IMR-90 (cell line): ENCODE measurements at regions of chr1 and their contacts with region 1.

Region 1: GRCh38 chr1:88180449-88181108 is 503.5 kb upstream of the PKN2 start:
- DNase-seq: peak; percentile 79
- ATAC-seq: peak; percentile 100
- H3K4me3 ChIP-seq: no peak overlapping the region
- H3K27ac ChIP-seq: no peak overlapping the region
- H3K4me1 ChIP-seq: no peaks in the 10 kb centered on the region; the same call in 1 of the 2 replicates
- H3K27me3 ChIP-seq: no peaks in the 10 kb centered on the region
- CTCF ChIP-seq: peak; percentile 83
- POLR2A ChIP-seq: no peak
- RAD21 ChIP-seq: peak; percentile 76

Region 2: GRCh38 chr1:88302843-88303486 is 122.4 kb after region 1 on chr1:
- CTCF ChIA-PET with region 1: interaction called, 3 read pairs
- POLR2A ChIA-PET with region 1: no interaction called
- dilution Hi-C with region 1: no loop called
- in situ Hi-C with region 1: no loop called
- intact Hi-C with region 1: loop called (anchors 1 kb)
- DNase-seq: peak; percentile 55
- ATAC-seq: peak; percentile 82
- H3K4me3 ChIP-seq: no peak overlapping the region
- H3K27ac ChIP-seq: no peak overlapping the region
- H3K4me1 ChIP-seq: no peaks in the 10 kb centered on the region
- H3K27me3 ChIP-seq: no peaks in the 10 kb centered on the region
- CTCF ChIP-seq: peak; percentile 65
- POLR2A ChIP-seq: no peak
- RAD21 ChIP-seq: peak; percentile 72

Region 3: DNA sequence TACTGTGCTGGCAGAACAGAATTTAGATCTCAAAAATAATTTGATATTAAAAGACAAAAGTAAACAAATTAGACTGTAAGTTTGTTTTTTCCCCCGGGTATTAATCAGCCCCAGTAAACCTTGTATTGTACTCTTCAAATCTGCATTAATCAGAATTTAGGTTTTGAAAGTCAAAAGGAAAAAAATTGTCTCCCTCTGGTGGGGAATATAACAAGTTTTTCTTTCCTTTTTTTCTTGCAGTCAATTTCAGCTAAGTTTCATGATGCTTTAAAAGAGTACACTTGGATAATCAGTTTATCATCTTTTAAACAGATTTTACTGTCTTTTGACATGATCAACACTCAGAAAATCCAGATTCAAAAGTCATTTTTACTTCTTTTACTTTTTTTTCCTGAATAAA is 369.0 kb after region 1 on chr1:
- CTCF ChIA-PET with region 1: no interaction called
- POLR2A ChIA-PET with region 1: no interaction called
- dilution Hi-C with region 1: no loop called
- in situ Hi-C with region 1: no loop called
- intact Hi-C with region 1: loop called (anchors 2 kb)
- DNase-seq: peak; percentile 3
- ATAC-seq: no peak
- H3K4me3 ChIP-seq: no peak overlapping the region
- H3K27ac ChIP-seq: no peak overlapping the region
- H3K4me1 ChIP-seq: no peaks in the 10 kb centered on the region
- H3K27me3 ChIP-seq: no peaks in the 10 kb centered on the region
- CTCF ChIP-seq: peak; percentile 22; the same call in 1 of the 2 replicates
- POLR2A ChIP-seq: no peak
- RAD21 ChIP-seq: 0 out of 2 replicates have a peak, but pooled peaks have one; percentile 10

Region 4: GRCh38 chr1:88595355-88596002 is 414.9 kb after region 1 on chr1:
- CTCF ChIA-PET with region 1: no interaction called
- POLR2A ChIA-PET with region 1: no interaction called
- dilution Hi-C with region 1: no loop called
- in situ Hi-C with region 1: no loop called
- intact Hi-C with region 1: loop called (anchors 1 kb)
- DNase-seq: peak; percentile 57
- ATAC-seq: peak; percentile 68
- H3K4me3 ChIP-seq: no peak overlapping the region
- H3K27ac ChIP-seq: no peak overlapping the region
- H3K4me1 ChIP-seq: no peaks in the 10 kb centered on the region
- H3K27me3 ChIP-seq: no peaks in the 10 kb centered on the region
- CTCF ChIP-seq: peak; percentile 60
- POLR2A ChIP-seq: no peak
- RAD21 ChIP-seq: peak; percentile 64